H1 (cell line): ENCODE measurements at regions of chr20 and their contacts with region 1.

Region 1: GRCh38 chr20:57290749-57291402 is 24.4 kb upstream of the BMP7 start:
- DNase-seq: peak; percentile 19 to 71
- H3K4me3 ChIP-seq: no peak overlapping the region
- H3K27ac ChIP-seq: no peak overlapping the region
- H3K4me1 ChIP-seq: peaks cover 0 to 14% (median 3%) of the 10 kb centered on the region in 4 experiments; a peak in 4 of 7 replicates
- H3K27me3 ChIP-seq: no peaks in the 10 kb centered on the region; a peak in 1 of 7 replicates
- CTCF ChIP-seq: peak; percentile 69 to 77 (median 71)
- EP300 ChIP-seq: no peak
- POLR2A ChIP-seq: no peak
- RAD21 ChIP-seq: peak; percentile 55 to 72

Region 2: DNA sequence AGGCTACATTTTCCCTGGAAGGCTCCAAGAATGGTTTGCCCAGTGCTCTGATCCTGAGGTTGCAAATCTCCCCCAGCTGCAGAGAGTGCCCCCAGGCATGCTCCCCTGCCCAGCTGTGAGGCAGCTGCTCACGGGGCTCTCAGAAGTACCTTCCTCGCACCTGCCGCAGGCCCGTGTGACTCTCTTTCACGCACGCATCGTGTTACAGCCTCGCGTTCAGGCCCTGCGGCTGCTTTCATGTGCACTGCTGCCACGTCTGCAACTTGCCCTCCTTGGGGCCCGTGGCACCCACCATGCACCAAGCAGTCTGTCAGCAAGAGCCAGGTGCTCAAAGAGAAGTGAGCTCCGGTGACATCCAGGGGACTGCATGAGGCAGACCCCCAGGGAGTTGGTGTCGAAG is 10.2 kb after region 1 on chr20:
- CTCF ChIA-PET with region 1: interaction called, 11 read pairs
- POLR2A ChIA-PET with region 1: no interaction called
- DNase-seq: no peak
- H3K4me3 ChIP-seq: no peak overlapping the region
- H3K27ac ChIP-seq: no peak overlapping the region
- H3K4me1 ChIP-seq: peaks cover 0 to 4% (median 0%) of the 10 kb centered on the region in 4 experiments; a peak in 1 of 7 replicates
- H3K27me3 ChIP-seq: no peaks in the 10 kb centered on the region
- CTCF ChIP-seq: no peak
- EP300 ChIP-seq: no peak
- POLR2A ChIP-seq: no peak
- RAD21 ChIP-seq: no peak